MCF 10A (cell line): ENCODE measurements at regions of chr1 and their contacts with region 1.

Region 1: GRCh38 chr1:216750012-216750627 is 26.9 kb upstream of the ESRRG start:
- DNase-seq: peak; percentile 72
- H3K4me3 Mint-ChIP-seq: no peak overlapping the region
- H3K27ac Mint-ChIP-seq: no peak overlapping the region
- H3K4me1 Mint-ChIP-seq: no peaks in the 10 kb centered on the region
- H3K27me3 Mint-ChIP-seq: peaks cover 6% of the 10 kb centered on the region
- CTCF ChIP-seq: peak; percentile 93

Region 2: DNA sequence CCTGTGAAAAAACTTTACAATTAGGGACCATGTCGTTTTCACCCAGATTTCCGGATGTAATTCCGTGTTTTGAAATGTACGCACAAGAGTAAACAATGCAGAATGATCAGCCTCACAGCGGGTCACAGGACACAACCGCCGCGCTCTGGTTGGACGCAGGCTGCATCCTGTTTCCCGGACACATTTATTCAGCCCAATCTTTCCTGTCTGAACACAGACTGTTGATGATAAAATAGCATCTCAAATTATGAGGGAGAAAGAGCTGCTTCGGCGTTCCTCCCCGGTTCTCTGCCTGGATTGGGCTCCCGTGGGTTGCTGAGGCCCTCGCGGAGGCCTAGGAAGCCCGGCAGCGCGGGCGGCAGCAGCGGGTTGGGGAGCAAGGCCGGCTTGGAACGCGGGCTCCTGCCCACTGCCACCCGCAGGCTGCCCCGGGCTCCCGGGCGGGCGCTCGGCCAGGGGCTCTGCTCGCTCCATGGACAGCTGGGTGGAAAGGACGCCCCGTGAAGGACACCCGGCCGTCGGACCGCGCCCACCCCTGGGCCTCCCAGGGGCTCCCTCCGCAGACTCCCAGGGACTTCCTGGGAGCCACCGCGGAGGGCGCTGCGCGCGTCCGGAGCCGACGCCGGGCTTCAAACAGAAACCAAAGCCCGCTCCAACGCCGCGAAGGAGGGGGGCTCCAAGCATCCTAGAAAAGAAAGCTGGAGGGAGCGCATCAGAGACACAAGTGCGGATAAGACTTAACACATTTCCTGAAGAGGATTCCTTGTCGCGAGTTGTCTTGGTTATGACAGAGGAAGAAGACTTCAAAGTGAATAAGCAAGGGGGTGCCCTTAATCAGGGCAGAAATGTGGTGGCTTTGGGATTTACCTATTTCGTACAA is 149.2 kb before region 1 on chr1:
- CTCF ChIA-PET with region 1: no interaction called
- POLR2A ChIA-PET with region 1: no interaction called
- intact Hi-C with region 1: no loop called
- DNase-seq: peak; percentile 30
- H3K4me3 Mint-ChIP-seq: peak overlapping the region; percentile 63
- H3K27ac Mint-ChIP-seq: no peak overlapping the region
- H3K4me1 Mint-ChIP-seq: no peaks in the 10 kb centered on the region
- H3K27me3 Mint-ChIP-seq: peaks cover 97% of the 10 kb centered on the region
- CTCF ChIP-seq: peak; percentile 26

Region 3: DNA sequence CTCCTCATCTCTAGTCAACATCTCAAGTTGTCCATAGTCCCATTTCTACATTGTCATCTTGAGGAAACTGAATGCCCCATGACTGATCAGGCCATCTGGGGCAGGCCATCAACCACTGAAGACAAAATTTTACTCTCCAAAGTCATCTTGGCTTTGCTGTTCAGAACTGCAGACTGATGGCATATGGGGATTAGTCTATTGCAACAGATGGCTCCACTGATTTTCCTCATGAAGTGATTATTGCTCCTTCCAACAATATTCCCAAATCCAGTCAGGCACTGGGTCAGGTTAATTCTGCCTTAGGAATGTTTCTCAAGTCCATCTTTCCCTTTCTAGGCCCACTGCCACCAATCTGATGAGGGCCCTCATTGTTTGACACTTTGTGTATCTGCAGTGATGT is 128.6 kb before region 1 on chr1:
- CTCF ChIA-PET with region 1: no interaction called
- POLR2A ChIA-PET with region 1: no interaction called
- intact Hi-C with region 1: no loop called
- DNase-seq: no peak
- H3K4me3 Mint-ChIP-seq: no peak overlapping the region
- H3K27ac Mint-ChIP-seq: no peak overlapping the region
- H3K4me1 Mint-ChIP-seq: no peaks in the 10 kb centered on the region
- H3K27me3 Mint-ChIP-seq: no peaks in the 10 kb centered on the region
- CTCF ChIP-seq: no peak

Region 4: GRCh38 chr1:216961516-216961915 is 211.4 kb after region 1 on chr1:
- CTCF ChIA-PET with region 1: interaction called, 6 read pairs
- POLR2A ChIA-PET with region 1: no interaction called
- intact Hi-C with region 1: loop called (anchors 5 kb)
- DNase-seq: no peak
- H3K4me3 Mint-ChIP-seq: no peak overlapping the region
- H3K27ac Mint-ChIP-seq: no peak overlapping the region
- H3K4me1 Mint-ChIP-seq: no peaks in the 10 kb centered on the region
- H3K27me3 Mint-ChIP-seq: no peaks in the 10 kb centered on the region
- CTCF ChIP-seq: peak; percentile 5

Region 5: GRCh38 chr1:217181756-217182155 is 431.6 kb after region 1 on chr1:
- CTCF ChIA-PET with region 1: interaction called, 12 read pairs
- POLR2A ChIA-PET with region 1: no interaction called
- intact Hi-C with region 1: no loop called
- DNase-seq: no peak
- H3K4me3 Mint-ChIP-seq: no peak overlapping the region
- H3K27ac Mint-ChIP-seq: no peak overlapping the region
- H3K4me1 Mint-ChIP-seq: no peaks in the 10 kb centered on the region
- H3K27me3 Mint-ChIP-seq: peaks cover 26% of the 10 kb centered on the region
- CTCF ChIP-seq: no peak

Region 6: DNA sequence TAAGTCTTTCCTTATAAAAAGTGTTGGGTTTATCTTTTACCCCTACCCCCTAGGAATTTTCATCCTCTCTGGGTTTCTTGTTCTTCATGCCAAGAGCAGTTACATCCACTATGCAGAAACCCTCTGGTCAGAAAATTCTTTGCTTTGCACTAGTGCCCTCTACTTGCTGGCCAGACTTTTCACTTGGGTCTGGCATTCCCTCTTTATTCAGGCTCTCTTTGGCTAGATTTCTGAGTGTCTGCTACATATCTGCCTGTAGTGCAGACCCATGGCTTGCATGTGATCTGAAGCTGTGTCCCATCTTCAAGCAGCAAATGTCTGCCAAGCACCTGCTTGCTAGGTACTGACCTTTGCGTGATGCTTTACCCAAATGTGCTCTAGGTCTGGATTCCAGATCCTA is 643.8 kb after region 1 on chr1:
- CTCF ChIA-PET with region 1: interaction called, 15 read pairs
- POLR2A ChIA-PET with region 1: no interaction called
- intact Hi-C with region 1: loop called (anchors 1 kb)
- DNase-seq: peak; percentile 38
- H3K4me3 Mint-ChIP-seq: no peak overlapping the region
- H3K27ac Mint-ChIP-seq: no peak overlapping the region
- H3K4me1 Mint-ChIP-seq: no peaks in the 10 kb centered on the region
- H3K27me3 Mint-ChIP-seq: peaks cover 16% of the 10 kb centered on the region
- CTCF ChIP-seq: no peak

Region 7: GRCh38 chr1:217747156-217747769 is 997.1 kb after region 1 on chr1:
- CTCF ChIA-PET with region 1: interaction called, 9 read pairs
- POLR2A ChIA-PET with region 1: no interaction called
- intact Hi-C with region 1: loop called (anchors 1 kb)
- DNase-seq: peak; percentile 66
- H3K4me3 Mint-ChIP-seq: no peak overlapping the region
- H3K27ac Mint-ChIP-seq: no peak overlapping the region
- H3K4me1 Mint-ChIP-seq: no peaks in the 10 kb centered on the region
- H3K27me3 Mint-ChIP-seq: no peaks in the 10 kb centered on the region
- CTCF ChIP-seq: peak; percentile 93